Cardiac septum (tissue), 1 donor: ENCODE measurements at regions of chr18 and their contacts with region 1.

Region 1: GRCh38 chr18:35240664-35241447 is at the start of gene ZNF397:
- DNase-seq: peak; percentile 99
- total RNA-seq, gene ZNF397: 18.0 TPM

Region 2: DNA sequence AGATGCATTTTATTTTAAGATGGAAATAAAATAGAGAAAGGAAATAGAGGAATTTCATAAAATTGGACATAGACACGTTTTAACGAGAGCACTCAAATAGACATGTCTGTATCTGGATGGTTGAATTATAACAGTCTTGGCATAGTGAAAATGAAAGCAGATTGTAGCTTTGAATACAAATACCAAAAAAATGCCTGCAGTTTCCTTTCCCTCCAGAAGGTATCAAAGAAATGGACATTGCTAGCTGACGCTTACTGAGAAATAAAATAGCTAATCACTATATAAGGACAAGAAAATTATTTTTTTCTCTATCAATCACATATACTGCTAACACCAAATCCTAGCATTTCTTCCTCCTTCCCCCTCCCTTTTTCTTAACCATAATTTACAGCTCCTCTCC is 211.1 kb before region 1 on chr18:
- intact Hi-C with region 1: loop called (anchors 10 kb)
- DNase-seq: no peak

Region 3: GRCh38 chr18:35267161-35267651 is 26.4 kb after region 1 on chr18:
- intact Hi-C with region 1: loop called (anchors 2 kb)
- DNase-seq: peak; percentile 83

Region 4: DNA sequence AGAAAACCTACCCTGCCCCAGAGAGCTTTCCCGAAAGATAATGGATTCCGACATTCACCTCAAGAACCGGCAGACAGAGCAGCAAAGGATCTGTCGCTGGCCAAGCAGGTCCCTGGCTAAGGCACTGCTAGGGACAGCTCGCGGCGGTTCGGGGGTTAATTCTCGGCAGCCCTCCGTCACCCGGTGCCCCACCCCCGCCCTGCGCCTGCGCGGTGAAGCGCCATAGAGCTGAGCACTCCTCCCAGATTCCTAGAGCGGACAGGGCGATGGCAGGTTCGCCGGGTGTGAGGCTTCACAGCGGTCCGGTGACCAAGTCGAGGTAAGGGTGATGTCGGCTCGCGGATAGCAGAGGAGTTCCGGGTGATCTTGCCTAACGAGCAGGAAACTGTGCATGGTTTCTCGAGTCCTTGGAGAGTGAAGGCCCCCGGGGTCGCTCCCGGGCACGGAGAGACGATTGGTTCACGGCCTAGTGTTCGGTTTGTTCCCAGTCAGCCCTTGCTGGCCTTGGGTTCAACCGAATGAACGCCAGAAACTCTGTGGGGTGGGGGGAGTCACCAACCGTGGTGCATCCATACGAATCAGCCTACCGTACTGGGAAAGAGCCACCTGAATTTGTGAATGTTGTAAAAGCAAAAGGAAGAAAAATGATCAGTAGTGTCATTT is 49.3 kb after region 1 on chr18 and contains the start of gene ZSCAN30:
- intact Hi-C with region 1: loop called (anchors 2 kb)
- DNase-seq: peak; percentile 98
- total RNA-seq, gene ZSCAN30: 18.6 TPM

Region 5: DNA sequence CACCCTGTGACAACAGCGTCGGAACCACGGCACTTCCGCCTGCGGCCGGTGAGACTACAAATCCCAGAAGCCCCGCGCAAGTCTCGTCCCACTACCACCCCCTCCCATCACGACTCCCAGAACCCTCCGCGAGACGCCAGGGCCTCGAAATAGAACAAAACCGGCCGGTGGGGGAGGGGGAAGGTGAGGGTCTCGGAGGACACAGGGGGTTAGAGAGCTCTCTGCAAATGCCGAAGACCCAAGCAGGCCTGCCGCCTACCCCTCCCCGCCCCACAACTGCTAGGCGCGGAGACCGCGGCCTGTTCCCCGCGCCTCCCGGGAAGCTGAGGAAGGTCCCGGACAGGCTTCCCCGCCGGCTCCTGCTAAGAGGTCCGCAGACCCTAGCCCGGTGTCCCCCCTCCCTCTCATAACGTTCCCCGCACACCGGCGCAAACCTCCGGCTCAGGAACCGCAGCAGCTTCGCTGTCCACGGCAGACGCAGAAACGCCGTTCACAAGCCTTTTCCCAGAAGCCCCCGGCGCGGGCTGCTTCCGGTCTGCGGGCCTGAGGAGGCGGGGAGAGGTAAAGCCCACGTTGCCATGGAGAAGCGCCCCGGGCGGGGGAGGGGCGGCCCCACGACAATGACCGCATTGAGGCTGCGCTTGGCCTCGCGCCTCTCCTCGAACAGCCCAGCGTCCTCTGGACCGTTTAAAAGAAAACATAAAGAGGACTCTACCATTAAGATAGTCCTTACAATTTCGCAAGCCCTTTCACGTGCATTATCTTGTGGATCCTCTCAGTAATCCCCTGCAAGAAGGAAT is 103.3 kb after region 1 on chr18 and contains the start of gene ZNF24:
- intact Hi-C with region 1: loop called (anchors 5 kb)
- DNase-seq: peak; percentile 97
- total RNA-seq, gene ZNF24: 44.2 TPM

Region 6: GRCh38 chr18:35371412-35372195 is 130.7 kb after region 1 on chr18:
- intact Hi-C with region 1: no loop called
- DNase-seq: no peak

Region 7: GRCh38 chr18:35972197-35973052 is 731.6 kb after region 1 on chr18 and contains the start of gene RMP24:
- intact Hi-C with region 1: loop called (anchors 5 kb)
- DNase-seq: peak; percentile 97

Region 8: GRCh38 chr18:36724591-36725001 is 1483.7 kb after region 1 on chr18:
- intact Hi-C with region 1: no loop called
- DNase-seq: peak; percentile 74